ENCODE measurements at regions of chr11 and their contacts with region 1.

Region 1: DNA sequence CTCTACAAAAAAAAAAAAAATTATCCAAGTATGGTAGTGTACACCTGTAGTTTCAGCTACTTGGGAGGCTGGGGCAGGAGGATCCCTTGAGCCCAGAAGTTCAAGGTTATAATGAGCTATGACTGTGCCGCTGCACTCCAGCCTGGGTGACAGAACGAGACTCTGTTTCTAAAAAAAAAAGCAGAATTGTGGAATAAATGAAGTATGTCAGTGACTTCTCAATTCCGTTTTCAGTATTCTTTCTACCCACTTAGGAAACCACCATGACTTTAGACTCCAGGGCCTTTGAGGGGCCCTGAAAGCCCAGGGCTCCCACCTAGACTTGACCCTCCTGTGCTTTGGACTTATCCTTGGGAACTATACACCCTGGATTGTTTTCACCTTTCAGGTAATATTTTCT is 6.5 kb upstream of the NUP160 start:
- DNase-seq: peak; percentile 35
- H3K4me3 ChIP-seq: no peak overlapping the region
- H3K27ac ChIP-seq: peak overlapping the region; percentile 22
- H3K4me1 ChIP-seq: peaks cover 97% of the 10 kb centered on the region
- CTCF ChIP-seq: no peak

Region 2: GRCh38 chr11:47454180-47454644 is 400.5 kb before region 1 on chr11:
- CTCF ChIA-PET with region 1: no interaction called
- POLR2A ChIA-PET with region 1: no interaction called
- intact Hi-C with region 1: loop called (anchors 2 kb)
- DNase-seq: peak; percentile 88
- H3K4me3 ChIP-seq: no peak overlapping the region
- H3K27ac ChIP-seq: no peak overlapping the region
- H3K4me1 ChIP-seq: no peaks in the 10 kb centered on the region
- CTCF ChIP-seq: peak; percentile 87

Region 3: DNA sequence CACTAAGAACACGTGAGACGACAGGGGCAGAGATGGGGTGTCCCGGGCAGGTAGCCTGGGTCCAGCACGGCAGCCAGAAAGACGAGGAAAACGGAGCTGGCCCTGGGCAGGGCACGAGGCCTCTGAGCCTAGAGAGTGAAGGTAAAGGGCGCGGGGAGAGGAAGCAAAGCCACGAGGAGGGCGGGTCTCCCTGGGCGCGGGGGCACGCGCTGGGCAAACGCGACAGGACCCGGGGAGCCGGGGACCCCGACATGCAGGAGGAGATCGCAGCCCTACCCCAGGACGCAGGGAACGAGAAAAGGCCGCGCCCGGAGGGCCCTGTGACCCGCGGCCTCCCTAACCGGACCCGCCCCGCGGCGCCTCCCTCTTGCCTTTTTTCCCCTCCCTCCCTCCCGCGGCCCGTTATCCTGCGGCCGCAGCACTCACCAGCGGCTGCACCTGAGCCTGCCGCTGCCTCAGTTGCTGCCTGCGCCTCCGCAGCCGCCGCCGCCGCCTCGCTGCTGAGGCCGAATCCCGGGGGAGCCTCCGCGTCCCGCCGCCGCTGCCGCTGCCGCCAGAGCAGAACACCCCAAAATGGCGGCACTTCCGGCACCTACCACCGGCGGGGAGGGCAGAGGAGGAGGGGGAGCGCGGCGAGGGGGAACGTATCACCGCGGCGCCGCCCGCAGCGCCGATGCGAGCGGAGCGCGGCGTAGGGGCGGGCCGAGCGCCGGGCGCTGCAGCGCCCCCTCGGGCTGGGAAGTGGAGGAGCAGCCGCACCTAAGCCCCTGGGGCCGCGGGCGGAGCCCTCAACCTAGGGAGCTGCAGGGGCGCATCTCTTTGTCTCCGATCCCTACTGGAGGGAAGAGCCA is 301.9 kb before region 1 on chr11 and contains the start of gene CELF1:
- CTCF ChIA-PET with region 1: no interaction called
- POLR2A ChIA-PET with region 1: interaction called, 4 read pairs
- intact Hi-C with region 1: loop called (anchors 2 kb)
- DNase-seq: peak; percentile 96
- H3K4me3 ChIP-seq: peak within 1 kb of the TSS; percentile 89
- H3K27ac ChIP-seq: peak within 1 kb of the TSS; percentile 65
- H3K4me1 ChIP-seq: peaks cover 29% of the 10 kb centered on the region
- CTCF ChIP-seq: peak; percentile 88
- total RNA-seq, gene CELF1: 82.1 and 87.4 TPM in 2 replicates

Region 4: GRCh38 chr11:47869546-47870393 is 15.1 kb after region 1 on chr11:
- CTCF ChIA-PET with region 1: no interaction called
- POLR2A ChIA-PET with region 1: no interaction called
- intact Hi-C with region 1: no loop called
- DNase-seq: no peak
- H3K4me3 ChIP-seq: no peak overlapping the region
- H3K27ac ChIP-seq: no peak overlapping the region
- H3K4me1 ChIP-seq: peaks cover 5% of the 10 kb centered on the region
- CTCF ChIP-seq: no peak

Region 5: DNA sequence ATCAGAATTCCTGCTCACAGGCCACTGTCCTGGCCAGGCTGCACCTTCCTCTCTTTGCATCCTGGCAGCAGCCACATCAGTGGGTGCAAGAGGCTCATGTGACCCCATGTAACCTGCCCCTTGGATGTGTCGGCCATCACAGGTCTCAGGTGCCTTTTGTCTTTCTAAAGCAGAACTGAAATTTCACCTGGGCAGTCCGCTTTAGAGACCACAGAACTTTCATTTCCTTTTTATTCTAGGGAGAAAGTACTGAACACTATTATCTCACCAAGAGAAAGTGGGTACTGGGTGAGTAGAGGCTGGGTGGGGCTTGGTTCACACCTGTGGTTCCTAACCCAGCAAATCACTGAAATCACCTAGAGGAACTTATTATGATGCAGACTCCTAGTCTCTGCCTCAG is 45.1 kb after region 1 on chr11:
- CTCF ChIA-PET with region 1: no interaction called
- POLR2A ChIA-PET with region 1: interaction called, 3 read pairs
- intact Hi-C with region 1: loop called (anchors 1 kb)
- DNase-seq: peak; percentile 94
- H3K4me3 ChIP-seq: peak overlapping the region; percentile 24
- H3K27ac ChIP-seq: peak overlapping the region; percentile 49
- H3K4me1 ChIP-seq: peaks cover 27% of the 10 kb centered on the region
- CTCF ChIP-seq: no peak

Region 6: DNA sequence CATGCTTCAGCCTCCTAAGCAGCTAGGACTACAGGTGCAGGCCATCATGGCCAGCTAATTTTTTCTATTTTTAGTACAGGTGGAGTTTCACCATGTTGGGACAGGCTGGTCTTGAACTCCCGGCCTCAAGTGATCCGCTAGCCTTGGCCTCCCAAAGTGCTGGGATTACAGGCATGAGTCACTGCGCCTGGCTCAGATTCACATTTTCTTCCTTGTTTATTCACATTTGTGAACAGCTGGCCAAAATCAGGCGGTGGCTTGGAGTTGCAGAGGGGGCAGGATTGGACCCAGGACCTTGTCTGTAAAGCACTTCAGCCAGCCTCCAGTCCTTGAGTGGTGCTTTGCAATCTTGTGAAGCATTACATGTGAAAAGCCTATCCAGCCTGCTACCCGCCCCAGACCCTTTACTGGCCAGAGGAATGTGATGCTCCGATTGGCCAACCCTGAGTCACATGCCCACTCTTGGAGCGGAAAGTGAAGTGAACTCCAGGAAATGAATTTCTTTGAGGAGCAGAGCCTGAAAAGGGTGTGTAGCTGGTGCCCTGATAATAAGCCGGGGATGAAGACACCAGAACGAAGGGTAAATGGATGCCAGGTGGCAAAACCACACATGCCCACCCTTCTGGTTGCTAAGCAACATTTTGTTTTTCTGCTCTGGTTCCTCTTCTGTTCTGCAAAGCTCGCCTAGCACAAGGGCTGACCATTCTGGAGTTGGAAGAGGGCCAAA is 63.1 kb after region 1 on chr11:
- CTCF ChIA-PET with region 1: no interaction called
- POLR2A ChIA-PET with region 1: no interaction called
- intact Hi-C with region 1: loop called (anchors 2 kb)
- DNase-seq: peak; percentile 69
- H3K4me3 ChIP-seq: no peak overlapping the region
- H3K27ac ChIP-seq: no peak overlapping the region
- H3K4me1 ChIP-seq: peaks cover 71% of the 10 kb centered on the region
- CTCF ChIP-seq: no peak

Region 7: DNA sequence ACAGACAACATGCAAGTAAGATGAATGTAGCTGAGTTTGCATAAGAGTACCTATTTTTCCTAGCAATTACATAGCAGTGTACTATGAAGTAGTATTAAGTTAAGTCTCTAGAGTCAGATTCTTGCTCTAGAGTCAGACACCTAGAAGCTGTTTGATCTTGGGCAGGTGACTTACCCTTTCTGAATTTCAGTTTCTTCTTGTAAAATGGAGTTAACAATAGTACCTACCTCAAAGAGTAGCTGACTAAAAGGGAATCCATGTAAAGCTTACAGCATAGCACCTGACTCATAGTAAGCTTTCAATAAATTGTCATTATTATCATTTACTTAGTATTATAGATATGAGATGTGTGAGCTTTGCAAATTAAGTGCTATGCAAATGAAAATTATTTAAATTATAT is 77.9 kb after region 1 on chr11:
- CTCF ChIA-PET with region 1: interaction called, 3 read pairs
- POLR2A ChIA-PET with region 1: interaction called, 5 read pairs
- intact Hi-C with region 1: loop called (anchors 1 kb)
- DNase-seq: no peak
- H3K4me3 ChIP-seq: no peak overlapping the region
- H3K27ac ChIP-seq: no peak overlapping the region
- H3K4me1 ChIP-seq: peaks cover 47% of the 10 kb centered on the region
- CTCF ChIP-seq: no peak

Region 8: GRCh38 chr11:48063424-48063978 is 208.8 kb after region 1 on chr11:
- CTCF ChIA-PET with region 1: no interaction called
- POLR2A ChIA-PET with region 1: no interaction called
- intact Hi-C with region 1: no loop called
- DNase-seq: no peak
- H3K4me3 ChIP-seq: no peak overlapping the region
- H3K27ac ChIP-seq: no peak overlapping the region
- H3K4me1 ChIP-seq: peaks cover 7% of the 10 kb centered on the region
- CTCF ChIP-seq: no peak